ENCODE measurements at regions of chr6 and their contacts with region 1.

Region 1: DNA sequence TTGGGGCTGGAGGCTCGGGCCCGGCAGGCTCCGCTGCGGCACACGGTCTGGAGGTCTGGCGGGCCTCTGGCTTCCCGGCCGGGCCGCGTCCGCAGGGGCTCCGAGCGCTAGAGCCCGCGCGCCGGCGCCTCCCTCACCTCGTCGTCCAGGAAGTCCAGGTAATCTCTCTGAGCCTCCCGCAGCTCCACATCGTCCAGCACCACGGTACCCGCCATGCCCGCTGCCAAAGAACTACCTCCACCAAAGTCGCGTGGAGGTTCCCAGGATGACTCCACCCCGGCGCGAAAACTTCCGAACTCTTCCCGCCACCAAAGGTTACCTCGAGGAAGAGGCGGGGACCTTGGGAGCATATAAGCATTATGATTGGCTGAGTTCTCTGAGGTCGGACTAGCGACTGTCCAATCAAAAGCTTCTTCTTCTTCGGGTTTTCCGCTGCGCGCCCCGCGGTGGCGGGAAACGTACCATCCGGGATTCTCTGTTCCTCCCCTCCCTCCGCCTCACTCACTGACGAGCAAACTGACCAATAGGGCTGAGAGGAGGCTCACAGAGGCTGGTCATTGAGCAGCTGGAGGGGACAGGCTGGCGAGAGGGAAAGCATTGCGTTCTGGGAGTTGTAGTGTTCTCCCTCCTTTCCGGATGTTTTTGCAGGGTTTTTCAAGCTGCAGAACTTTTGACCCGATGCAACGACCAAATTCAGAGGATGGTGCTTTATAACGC is at the start of gene MCM3:
- DNase-seq: peak; percentile 97 to 99
- H3K4me3 ChIP-seq: peak within 1 kb of the TSS; percentile 87
- H3K4me3 Mint-ChIP-seq: no peak within 1 kb of the TSS
- H3K27ac Mint-ChIP-seq: no peak within 1 kb of the TSS
- H3K4me1 ChIP-seq: 0 out of 2 replicates have a peak, but pooled peaks cover 6% of the 10 kb centered on the region
- H3K4me1 Mint-ChIP-seq: no peaks in the 10 kb centered on the region
- H3K27me3 ChIP-seq: no peaks in the 10 kb centered on the region
- H3K27me3 Mint-ChIP-seq: no peaks in the 10 kb centered on the region
- CTCF ChIP-seq: no peak
- total RNA-seq, gene MCM3: 151 and 152 TPM in 2 replicates

Region 2: DNA sequence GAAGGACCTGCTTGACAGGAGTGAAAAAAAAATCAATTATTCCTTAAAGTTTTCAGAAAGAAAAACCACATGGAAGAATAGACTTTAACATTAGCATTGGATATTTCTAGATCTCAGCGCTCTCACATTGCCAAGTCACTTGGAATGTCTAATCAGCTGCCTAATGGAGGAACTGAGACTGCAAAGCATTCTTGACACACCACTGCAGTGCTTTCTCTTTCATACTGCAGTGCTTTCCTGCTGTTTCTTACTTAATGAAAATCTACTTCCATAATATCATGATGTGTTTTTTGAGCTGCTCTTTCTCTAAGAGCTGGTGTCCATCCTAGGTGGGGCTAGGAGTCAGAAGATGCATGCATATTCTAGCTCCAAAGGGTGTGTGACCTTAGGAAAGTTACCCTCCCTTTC is 20.4 kb after region 1 on chr6:
- CTCF ChIA-PET with region 1: no interaction called
- POLR2A ChIA-PET with region 1: interaction called, 3 read pairs
- intact Hi-C with region 1: loop called (anchors 2 kb)
- DNase-seq: no peak
- H3K4me3 ChIP-seq: no peak overlapping the region
- H3K4me3 Mint-ChIP-seq: no peak overlapping the region
- H3K27ac Mint-ChIP-seq: peak overlapping the region; percentile 98
- H3K4me1 ChIP-seq: peaks cover 51% of the 10 kb centered on the region
- H3K4me1 Mint-ChIP-seq: peaks cover 38% of the 10 kb centered on the region
- H3K27me3 ChIP-seq: no peaks in the 10 kb centered on the region
- H3K27me3 Mint-ChIP-seq: no peaks in the 10 kb centered on the region
- CTCF ChIP-seq: no peak

Region 3: DNA sequence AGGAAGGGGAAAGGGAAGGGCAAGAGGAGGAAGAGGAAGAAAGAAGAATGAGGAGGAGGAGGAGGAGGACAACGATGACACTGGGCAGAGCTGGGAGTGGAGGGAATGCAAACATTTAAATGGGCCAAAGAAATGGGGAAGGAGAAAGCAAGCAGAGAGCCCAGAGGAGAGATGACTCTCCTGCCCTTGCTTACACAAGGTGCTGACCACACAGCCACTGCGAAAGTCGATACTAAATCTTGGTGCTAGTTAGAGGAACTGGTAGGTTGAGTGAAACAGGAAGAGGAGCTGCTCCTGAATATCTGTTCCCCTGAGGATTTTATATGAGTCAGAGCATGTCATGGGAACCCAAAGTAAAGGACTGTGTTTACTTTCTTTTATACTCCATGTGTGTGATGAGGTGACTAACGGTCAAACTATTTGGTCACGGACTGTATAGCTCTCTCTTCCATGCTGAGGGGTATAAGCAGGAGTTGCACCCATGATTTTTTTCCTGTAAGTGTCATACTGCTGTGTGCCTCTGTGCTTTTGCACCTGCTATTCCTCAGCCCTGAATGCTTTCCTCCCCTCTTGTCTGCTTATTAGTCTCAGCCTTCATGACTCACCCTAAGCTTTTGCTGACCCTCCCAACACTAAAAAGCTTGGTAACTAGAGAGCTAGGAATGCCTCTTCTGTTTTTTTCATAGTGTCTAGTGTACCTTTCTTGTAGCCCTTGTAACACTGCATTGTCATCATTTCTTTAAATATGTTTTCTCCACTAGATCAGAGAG is 67.8 kb after region 1 on chr6:
- CTCF ChIA-PET with region 1: no interaction called
- POLR2A ChIA-PET with region 1: interaction called, 7 read pairs
- intact Hi-C with region 1: loop called (anchors 1 kb)
- DNase-seq: peak; percentile 70 to 75
- H3K4me3 ChIP-seq: no peak overlapping the region
- H3K4me3 Mint-ChIP-seq: peak overlapping the region; percentile 62
- H3K27ac Mint-ChIP-seq: peak overlapping the region; percentile 89
- H3K4me1 ChIP-seq: peaks cover 39% of the 10 kb centered on the region
- H3K4me1 Mint-ChIP-seq: peaks cover 38% of the 10 kb centered on the region
- H3K27me3 ChIP-seq: no peaks in the 10 kb centered on the region
- H3K27me3 Mint-ChIP-seq: no peaks in the 10 kb centered on the region
- CTCF ChIP-seq: no peak

Region 4: DNA sequence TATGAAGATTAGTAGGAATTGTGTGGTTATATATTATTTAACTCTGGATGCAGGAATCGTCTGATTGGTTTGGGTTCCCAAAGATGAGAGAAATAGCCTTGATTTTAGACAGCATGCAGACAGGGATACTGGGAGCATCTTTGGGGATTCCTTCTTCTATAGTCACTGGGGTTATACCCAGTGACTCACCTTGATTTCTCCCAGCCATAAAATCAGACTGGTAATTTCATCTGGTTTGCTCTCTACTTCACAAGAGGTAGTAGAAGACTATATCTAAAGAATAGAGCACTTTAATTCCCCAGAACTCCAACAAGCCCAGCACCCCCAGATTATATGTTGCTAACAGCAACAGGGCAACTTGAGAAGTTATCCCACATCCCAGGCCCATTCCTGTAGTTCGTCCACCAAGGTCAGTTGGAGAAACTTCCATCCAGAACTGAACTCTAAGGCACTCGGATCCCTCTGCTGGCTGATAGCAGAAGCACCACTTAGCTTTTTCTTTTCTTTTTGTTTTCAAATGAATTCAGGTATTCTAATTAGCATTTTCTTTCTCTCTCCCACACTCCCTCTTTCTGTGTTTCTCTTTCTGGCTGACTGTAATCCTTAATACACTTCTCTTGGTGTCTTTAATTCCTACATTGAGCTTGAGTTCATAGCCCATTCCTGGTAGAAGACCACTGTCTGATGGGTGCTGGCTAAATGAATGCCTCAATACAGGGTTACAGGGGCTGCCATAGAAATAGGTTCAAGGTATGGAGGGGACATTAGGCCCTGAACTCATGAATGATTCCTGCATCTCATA is 115.1 kb after region 1 on chr6:
- CTCF ChIA-PET with region 1: interaction called, 25 read pairs
- POLR2A ChIA-PET with region 1: interaction called, 6 read pairs
- intact Hi-C with region 1: loop called (anchors 1 kb)
- DNase-seq: peak; percentile 39 to 56
- H3K4me3 ChIP-seq: no peak overlapping the region
- H3K4me3 Mint-ChIP-seq: no peak overlapping the region
- H3K27ac Mint-ChIP-seq: no peak overlapping the region
- H3K4me1 ChIP-seq: no peaks in the 10 kb centered on the region
- H3K4me1 Mint-ChIP-seq: no peaks in the 10 kb centered on the region
- H3K27me3 ChIP-seq: no peaks in the 10 kb centered on the region
- H3K27me3 Mint-ChIP-seq: no peaks in the 10 kb centered on the region
- CTCF ChIP-seq: peak; percentile 79 to 84